ENCODE measurements at regions of chr12 and their contacts with region 1.

Region 1: GRCh38 chr12:28172434-28173030 is 17.7 kb upstream of the CCDC91 start:
- DNase-seq: peak; percentile 36
- ATAC-seq: peak; percentile 93
- H3K4me3 ChIP-seq: no peak overlapping the region
- H3K27ac ChIP-seq: no peak overlapping the region
- H3K4me1 ChIP-seq: no peaks in the 10 kb centered on the region
- H3K27me3 ChIP-seq: no peaks in the 10 kb centered on the region
- CTCF ChIP-seq: peak; percentile 53 to 73 (median 72); a peak in 5 of 6 replicates
- POLR2A ChIP-seq: no peak
- RAD21 ChIP-seq: peak; percentile 72

Region 2: GRCh38 chr12:27821259-27821973 is 351.1 kb before region 1 on chr12:
- CTCF ChIA-PET with region 1: no interaction called
- POLR2A ChIA-PET with region 1: no interaction called
- RAD21 ChIA-PET with region 1: no interaction called
- intact Hi-C with region 1: loop called (anchors 10 kb)
- DNase-seq: peak; percentile 77
- ATAC-seq: peak; percentile 90
- H3K4me3 ChIP-seq: no peak overlapping the region
- H3K27ac ChIP-seq: no peak overlapping the region
- H3K4me1 ChIP-seq: peaks cover 0 to 16% of the 10 kb centered on the region in 2 experiments; a peak in 2 of 4 replicates
- H3K27me3 ChIP-seq: no peaks in the 10 kb centered on the region
- CTCF ChIP-seq: peak; percentile 56 to 82 (median 70); a peak in 4 of 6 replicates
- POLR2A ChIP-seq: peak; percentile 12
- RAD21 ChIP-seq: peak; percentile 69

Region 3: DNA sequence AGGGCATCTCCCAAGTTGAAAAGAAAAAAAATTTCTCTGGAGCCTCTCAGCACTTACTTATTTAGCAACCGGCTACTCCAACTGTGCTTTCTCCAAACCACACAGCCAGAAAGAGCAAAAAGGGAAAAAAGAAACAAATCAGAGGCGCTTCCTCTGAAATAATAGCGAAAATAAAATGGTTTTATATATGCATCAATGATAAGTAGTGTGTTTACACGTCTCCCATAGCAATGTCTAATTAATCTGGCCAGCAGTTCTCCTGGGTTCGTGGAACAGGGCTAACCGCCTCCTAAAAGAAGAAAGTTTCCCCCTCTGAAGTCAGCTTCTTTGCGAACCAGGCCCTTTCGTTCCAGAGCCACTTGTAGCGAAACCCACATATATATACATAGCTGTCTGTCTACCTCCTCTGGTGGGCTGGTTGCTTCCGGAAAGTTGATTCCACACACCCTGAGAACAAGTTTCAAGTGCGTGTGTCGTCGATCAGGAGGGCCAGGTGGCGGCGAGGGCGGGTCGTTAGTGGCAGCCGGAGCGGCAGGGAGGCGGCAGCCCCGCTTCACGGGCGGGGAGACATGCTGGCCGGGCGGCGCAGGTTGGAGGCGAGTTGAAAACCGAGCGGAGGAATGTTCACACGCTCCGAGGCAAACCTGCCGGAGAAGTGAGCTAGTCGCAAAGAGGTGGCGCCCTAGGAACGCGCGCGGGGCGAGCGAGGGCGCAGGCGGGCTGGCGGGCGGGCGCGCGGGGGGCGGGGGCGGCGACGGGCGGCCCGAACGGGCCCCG is 202.7 kb before region 1 on chr12:
- CTCF ChIA-PET with region 1: interaction called, 5 read pairs
- POLR2A ChIA-PET with region 1: no interaction called
- RAD21 ChIA-PET with region 1: no interaction called
- intact Hi-C with region 1: loop called (anchors 10 kb)
- DNase-seq: peak; percentile 45
- ATAC-seq: peak; percentile 82
- H3K4me3 ChIP-seq: peak overlapping the region; percentile 49 to 60
- H3K27ac ChIP-seq: no peak overlapping the region
- H3K4me1 ChIP-seq: peaks cover 17 to 43% of the 10 kb centered on the region in 2 experiments
- H3K27me3 ChIP-seq: no peaks in the 10 kb centered on the region
- CTCF ChIP-seq: peak in 2 of 3 experiments; percentile 14 to 15; a peak in 1 of 6 replicates
- POLR2A ChIP-seq: no peak
- RAD21 ChIP-seq: peak; percentile 65

Region 4: DNA sequence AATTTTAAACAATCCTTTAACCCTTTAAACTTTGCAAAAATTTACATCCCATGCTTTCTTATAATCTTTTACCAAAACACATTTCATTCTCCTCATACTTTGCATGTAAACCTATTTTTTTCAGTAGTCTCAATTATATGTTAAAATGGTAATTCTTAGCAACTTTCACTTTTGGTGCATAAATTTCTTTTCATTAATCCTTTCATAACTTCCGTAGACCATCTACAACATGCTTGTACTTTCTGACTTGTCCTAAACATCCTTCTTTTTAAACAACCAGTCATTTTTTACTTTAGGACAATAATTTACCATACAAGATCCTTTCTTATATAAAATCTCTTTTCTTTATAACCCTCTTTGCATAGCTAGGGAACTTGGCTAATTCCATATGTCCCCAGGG is 37.2 kb after region 1 on chr12:
- CTCF ChIA-PET with region 1: no interaction called
- POLR2A ChIA-PET with region 1: no interaction called
- RAD21 ChIA-PET with region 1: no interaction called
- intact Hi-C with region 1: no loop called
- DNase-seq: no peak
- ATAC-seq: no peak
- H3K4me3 ChIP-seq: no peak overlapping the region
- H3K27ac ChIP-seq: no peak overlapping the region
- H3K4me1 ChIP-seq: no peaks in the 10 kb centered on the region
- H3K27me3 ChIP-seq: no peaks in the 10 kb centered on the region
- CTCF ChIP-seq: no peak
- POLR2A ChIP-seq: no peak
- RAD21 ChIP-seq: no peak

Region 5: DNA sequence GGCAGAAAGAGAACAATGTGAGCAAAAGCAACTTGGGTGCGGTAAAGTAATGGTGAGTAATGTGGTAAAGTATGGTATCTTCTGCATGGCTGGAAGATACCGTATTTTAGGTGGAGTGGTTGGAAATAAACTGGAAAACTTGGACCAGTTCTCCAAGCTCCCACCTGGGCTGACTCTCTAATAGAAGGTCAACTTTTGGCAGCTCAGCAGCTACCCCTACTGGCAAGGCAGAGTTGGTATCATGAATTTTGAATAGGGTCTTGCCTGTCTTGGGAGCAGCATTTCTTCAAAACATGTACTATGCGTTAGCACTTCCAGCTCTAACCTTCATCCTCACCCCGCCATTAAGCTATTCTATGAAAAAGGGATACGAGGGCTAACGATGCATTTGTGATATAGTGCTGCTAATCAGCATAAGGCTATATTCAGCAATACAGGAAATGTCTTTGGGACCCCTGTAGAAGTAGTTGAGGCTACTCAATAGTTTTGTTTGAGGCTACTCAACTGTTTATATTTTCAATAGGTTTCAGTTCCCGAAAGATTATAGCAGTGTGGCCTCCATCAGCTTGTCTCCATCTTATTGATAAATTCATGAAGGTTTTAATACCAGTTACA is 700.2 kb after region 1 on chr12:
- CTCF ChIA-PET with region 1: no interaction called
- POLR2A ChIA-PET with region 1: no interaction called
- RAD21 ChIA-PET with region 1: no interaction called
- intact Hi-C with region 1: loop called (anchors 5 kb)
- DNase-seq: peak; percentile 46
- ATAC-seq: peak; percentile 87
- H3K4me3 ChIP-seq: no peak overlapping the region
- H3K27ac ChIP-seq: no peak overlapping the region
- H3K4me1 ChIP-seq: peaks cover 0 to 5% of the 10 kb centered on the region in 2 experiments; a peak in 1 of 4 replicates
- H3K27me3 ChIP-seq: no peaks in the 10 kb centered on the region
- CTCF ChIP-seq: peak; percentile 50 to 87 (median 84); a peak in 5 of 6 replicates
- POLR2A ChIP-seq: no peak
- RAD21 ChIP-seq: peak; percentile 78